ENCODE measurements at regions of chr15 and their contacts with region 1.

Region 1: DNA sequence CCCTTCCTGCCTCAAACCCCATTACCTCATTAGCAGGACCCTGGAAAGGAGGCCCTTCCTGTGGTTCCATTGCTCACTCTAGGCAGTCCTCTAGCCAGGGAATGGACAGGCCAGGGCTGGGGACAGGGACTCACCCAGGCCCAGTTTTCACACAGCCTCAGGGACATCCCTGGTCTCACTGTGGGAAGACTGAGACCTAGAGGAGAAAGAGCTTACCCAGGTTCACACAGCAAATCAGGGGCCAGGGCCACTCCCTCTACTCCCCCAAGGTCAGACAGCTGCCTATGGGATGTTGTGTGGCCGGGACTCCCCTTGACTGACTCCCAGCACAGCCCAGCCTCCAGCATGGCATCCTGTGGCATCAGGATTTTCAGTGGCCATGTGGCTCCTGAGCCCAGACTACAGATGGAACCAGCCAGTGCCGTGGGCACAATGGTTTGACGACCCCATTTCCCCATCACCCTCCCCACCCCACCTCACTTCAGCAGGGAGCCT is 49.3 kb downstream of the ADAMTS7 start:
- DNase-seq: no peak
- H3K4me3 ChIP-seq: peak overlapping the region; percentile 53
- H3K27ac ChIP-seq: peak overlapping the region; percentile 86
- H3K4me1 ChIP-seq: peaks cover 60% of the 10 kb centered on the region
- CTCF ChIP-seq: no peak

Region 2: GRCh38 chr15:78811124-78811824 is 49.3 kb after region 1 on chr15 and contains the start of gene ADAMTS7:
- CTCF ChIA-PET with region 1: no interaction called
- POLR2A ChIA-PET with region 1: no interaction called
- intact Hi-C with region 1: loop called (anchors 1 kb)
- DNase-seq: peak; percentile 61
- H3K4me3 ChIP-seq: peak within 1 kb of the TSS; percentile 56
- H3K27ac ChIP-seq: no peak within 1 kb of the TSS
- H3K4me1 ChIP-seq: peaks cover 9% of the 10 kb centered on the region
- CTCF ChIP-seq: peak; percentile 81
- total RNA-seq, gene ADAMTS7: 0.13 and 0.19 TPM in 2 replicates

Region 3: DNA sequence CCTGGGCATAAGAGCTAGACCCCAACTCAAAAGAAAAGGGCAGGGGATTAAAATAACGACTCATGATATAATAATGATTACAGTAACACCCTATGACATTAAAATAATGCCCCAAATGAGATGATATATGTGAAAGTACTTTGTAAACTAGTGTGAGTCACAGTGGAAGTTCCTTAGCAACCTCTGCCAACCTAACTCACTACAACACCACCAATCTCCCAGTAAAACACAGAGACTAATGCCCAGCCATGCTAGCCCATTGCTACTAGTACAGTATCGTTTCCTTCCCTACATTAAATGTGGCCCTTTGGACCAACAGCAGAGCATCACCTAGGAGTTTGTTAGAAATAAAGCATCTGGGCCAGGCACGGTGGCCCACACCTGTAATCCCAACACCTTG is 60.6 kb after region 1 on chr15:
- CTCF ChIA-PET with region 1: no interaction called
- POLR2A ChIA-PET with region 1: no interaction called
- intact Hi-C with region 1: no loop called
- DNase-seq: no peak
- H3K4me3 ChIP-seq: no peak overlapping the region
- H3K27ac ChIP-seq: no peak overlapping the region
- H3K4me1 ChIP-seq: peaks cover 7% of the 10 kb centered on the region
- CTCF ChIP-seq: no peak

Region 4: GRCh38 chr15:78840661-78841375 is 78.9 kb after region 1 on chr15:
- CTCF ChIA-PET with region 1: no interaction called
- POLR2A ChIA-PET with region 1: no interaction called
- intact Hi-C with region 1: no loop called
- DNase-seq: peak; percentile 51
- H3K4me3 ChIP-seq: no peak overlapping the region
- H3K27ac ChIP-seq: peak overlapping the region; percentile 36
- H3K4me1 ChIP-seq: peaks cover 65% of the 10 kb centered on the region
- CTCF ChIP-seq: no peak

Region 5: DNA sequence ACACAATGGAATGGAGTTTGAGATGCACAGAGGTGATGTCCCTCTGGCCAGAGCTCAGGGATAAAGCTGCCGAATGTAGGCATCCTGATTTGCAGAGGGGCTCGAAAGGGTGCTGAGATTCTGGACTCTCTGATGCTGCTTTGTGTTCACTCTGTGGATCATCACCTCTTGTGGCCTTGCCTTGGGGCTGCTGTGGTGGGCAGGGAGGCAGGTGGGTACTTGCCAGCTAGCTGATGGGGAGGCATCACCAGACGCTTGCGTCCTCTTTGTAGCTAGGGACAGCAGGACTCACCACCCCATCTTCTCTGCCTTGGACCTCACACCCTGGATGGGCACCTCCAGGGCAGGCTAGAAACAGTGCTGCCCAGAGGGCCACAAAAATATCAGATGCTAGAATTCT is 343.2 kb after region 1 on chr15:
- CTCF ChIA-PET with region 1: no interaction called
- POLR2A ChIA-PET with region 1: no interaction called
- intact Hi-C with region 1: no loop called
- DNase-seq: no peak
- H3K4me3 ChIP-seq: no peak overlapping the region
- H3K27ac ChIP-seq: no peak overlapping the region
- H3K4me1 ChIP-seq: peaks cover 23% of the 10 kb centered on the region
- CTCF ChIP-seq: no peak

Region 6: GRCh38 chr15:79364571-79365240 is 602.8 kb after region 1 on chr15:
- CTCF ChIA-PET with region 1: no interaction called
- POLR2A ChIA-PET with region 1: no interaction called
- intact Hi-C with region 1: no loop called
- DNase-seq: no peak
- H3K4me3 ChIP-seq: no peak overlapping the region
- H3K27ac ChIP-seq: no peak overlapping the region
- H3K4me1 ChIP-seq: no peaks in the 10 kb centered on the region
- CTCF ChIP-seq: no peak

Measured in OCI-LY7 (cell line).